ENCODE measurements at regions of chr4 and their contacts with region 1.

Region 1: DNA sequence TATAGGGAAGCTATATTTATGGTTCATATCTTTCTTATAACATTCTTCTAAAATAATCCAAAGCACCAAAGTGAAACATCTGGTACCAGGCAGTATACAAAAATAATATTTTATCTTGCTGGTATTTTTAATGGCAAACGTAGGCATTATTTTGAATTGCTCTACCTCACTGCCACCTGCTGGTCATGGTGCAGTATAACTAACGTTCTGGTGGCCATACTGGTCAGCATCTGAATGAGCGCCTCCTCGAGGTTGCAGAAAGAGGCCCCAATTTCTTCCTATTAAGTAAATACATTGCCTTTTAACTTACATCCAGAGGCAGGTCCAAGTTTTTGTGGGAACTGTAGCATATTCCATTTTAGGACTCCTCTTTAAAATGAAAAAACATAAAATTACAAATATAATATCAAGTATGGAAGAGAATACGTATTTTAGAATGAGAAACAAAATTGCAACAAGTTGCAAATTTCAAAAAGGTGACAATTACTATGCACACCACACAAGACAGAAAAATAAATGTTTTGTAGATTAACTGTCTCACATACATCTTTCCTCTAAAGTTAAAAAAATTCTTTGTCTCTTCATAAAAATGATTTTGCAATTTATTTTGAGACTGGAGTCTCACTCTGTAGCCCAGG is 22.9 kb upstream of the CWH43 start:
- DNase-seq: peak; percentile 44 to 87 (median 68)
- ATAC-seq: peak; percentile 89 to 97 (median 94)
- H3K4me3 ChIP-seq: no peak overlapping the region
- H3K4me3 Mint-ChIP-seq: no peak overlapping the region
- H3K27ac ChIP-seq: no peak overlapping the region
- H3K27ac Mint-ChIP-seq: no peak overlapping the region
- H3K4me1 ChIP-seq: no peaks in the 10 kb centered on the region
- H3K4me1 Mint-ChIP-seq: peaks cover 3 to 9% (median 3%) of the 10 kb centered on the region in 3 donors
- H3K27me3 ChIP-seq: no peaks in the 10 kb centered on the region
- H3K27me3 Mint-ChIP-seq: peaks cover 0 to 2% of the 10 kb centered on the region in 2 donors

Region 2: GRCh38 chr4:47954245-47954644 is 1008.9 kb before region 1 on chr4:
- CTCF ChIA-PET with region 1: no interaction called
- POLR2A ChIA-PET with region 1: no interaction called
- DNase-seq: no peak
- ATAC-seq: no peak
- H3K4me3 ChIP-seq: no peak overlapping the region
- H3K4me3 Mint-ChIP-seq: no peak overlapping the region
- H3K27ac ChIP-seq: no peak overlapping the region
- H3K27ac Mint-ChIP-seq: no peak overlapping the region
- H3K4me1 ChIP-seq: no peaks in the 10 kb centered on the region
- H3K4me1 Mint-ChIP-seq: no peaks in the 10 kb centered on the region
- H3K27me3 ChIP-seq: no peaks in the 10 kb centered on the region
- H3K27me3 Mint-ChIP-seq: peaks cover 3 to 5% of the 10 kb centered on the region in 2 donors

Region 3: DNA sequence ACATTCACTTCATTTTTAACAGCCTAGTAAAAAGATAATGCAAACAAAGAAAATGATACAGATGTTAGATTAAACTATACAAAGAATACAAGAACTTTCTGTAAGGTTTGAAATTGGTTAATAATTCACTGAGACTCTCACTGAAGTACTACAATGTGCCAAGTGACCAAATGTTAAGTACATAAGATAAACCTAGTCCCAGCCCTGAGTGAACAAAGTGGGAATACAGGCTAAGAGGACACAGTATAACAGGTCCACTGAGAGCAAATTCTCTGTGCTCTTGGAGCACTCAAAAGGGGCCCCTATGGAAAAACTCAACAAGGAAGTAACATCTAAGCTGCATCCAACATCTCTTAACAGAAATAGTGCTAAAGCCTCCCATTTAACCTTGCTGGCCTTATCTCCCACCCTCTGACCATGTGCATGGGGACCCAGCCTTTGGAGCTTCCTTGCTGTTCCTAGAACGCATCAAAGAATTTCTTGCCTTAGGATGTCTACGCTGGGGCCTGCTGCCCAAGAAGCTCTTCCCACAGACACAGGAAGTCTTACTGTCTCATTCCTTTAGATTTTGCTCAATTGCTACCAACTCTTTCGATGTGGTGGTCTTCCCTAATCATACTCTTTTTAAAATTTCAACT is 359.7 kb before region 1 on chr4:
- CTCF ChIA-PET with region 1: no interaction called
- POLR2A ChIA-PET with region 1: no interaction called
- DNase-seq: no peak
- ATAC-seq: no peak
- H3K4me3 ChIP-seq: no peak overlapping the region
- H3K4me3 Mint-ChIP-seq: no peak overlapping the region
- H3K27ac ChIP-seq: no peak overlapping the region
- H3K27ac Mint-ChIP-seq: peak overlapping the region; percentile 31 to 46
- H3K4me1 ChIP-seq: no peaks in the 10 kb centered on the region
- H3K4me1 Mint-ChIP-seq: peaks cover 0 to 3% (median 1%) of the 10 kb centered on the region in 3 donors
- H3K27me3 ChIP-seq: no peaks in the 10 kb centered on the region
- H3K27me3 Mint-ChIP-seq: no peaks in the 10 kb centered on the region

Region 4: DNA sequence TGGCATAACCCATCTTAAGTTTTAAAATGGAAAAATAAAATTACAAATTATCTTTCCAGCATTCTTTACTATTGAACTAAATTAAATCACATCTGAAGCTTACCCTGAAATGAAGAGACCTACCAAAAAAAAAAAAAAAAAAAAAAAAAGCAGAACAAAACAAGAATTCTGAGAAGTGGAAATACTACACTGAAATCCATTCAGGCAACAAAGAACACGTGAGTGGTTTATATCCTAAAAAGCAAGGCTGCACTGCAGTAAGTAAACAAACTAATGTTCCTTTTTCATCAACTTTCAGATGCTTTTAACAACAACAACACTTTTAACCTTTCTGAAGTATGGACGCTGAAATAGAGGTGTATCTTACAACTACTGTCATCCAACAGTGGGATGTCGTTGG is 190.6 kb before region 1 on chr4:
- CTCF ChIA-PET with region 1: no interaction called
- POLR2A ChIA-PET with region 1: interaction called in 1 of 2 experiments, 10 read pairs
- DNase-seq: no peak
- ATAC-seq: no peak
- H3K4me3 ChIP-seq: no peak overlapping the region
- H3K4me3 Mint-ChIP-seq: peak overlapping the region in 1 of 3 donors; percentile 17
- H3K27ac ChIP-seq: no peak overlapping the region
- H3K27ac Mint-ChIP-seq: no peak overlapping the region
- H3K4me1 ChIP-seq: peaks cover 19 to 29% of the 10 kb centered on the region in 2 experiments
- H3K4me1 Mint-ChIP-seq: peaks cover 83 to 91% (median 84%) of the 10 kb centered on the region in 3 donors
- H3K27me3 ChIP-seq: no peaks in the 10 kb centered on the region
- H3K27me3 Mint-ChIP-seq: no peaks in the 10 kb centered on the region

Region 5: DNA sequence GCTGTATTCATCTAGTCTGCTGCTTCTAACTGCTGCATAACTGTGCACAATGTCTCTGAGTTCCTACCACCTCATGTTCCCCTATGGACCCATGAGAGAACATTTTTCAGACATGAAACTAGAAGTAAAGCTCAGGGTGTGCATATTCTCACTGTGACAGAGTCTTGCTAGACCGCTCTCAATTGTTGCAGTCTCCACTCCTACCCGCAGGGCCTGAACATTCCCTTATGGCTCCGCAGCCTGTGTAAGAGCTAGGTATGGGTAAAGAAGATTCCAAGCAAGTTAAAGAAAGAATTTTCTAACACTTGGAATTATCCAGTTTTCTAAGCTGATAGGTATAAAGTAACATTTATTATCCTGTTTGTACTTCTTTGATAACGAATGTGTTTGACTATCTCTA is 62.0 kb before region 1 on chr4:
- CTCF ChIA-PET with region 1: interaction called, 7 to 11 read pairs
- POLR2A ChIA-PET with region 1: interaction called in 1 of 2 experiments, 4 read pairs
- DNase-seq: no peak
- ATAC-seq: no peak
- H3K4me3 ChIP-seq: no peak overlapping the region
- H3K4me3 Mint-ChIP-seq: no peak overlapping the region
- H3K27ac ChIP-seq: no peak overlapping the region
- H3K27ac Mint-ChIP-seq: peak overlapping the region in 1 of 2 donors; percentile 18
- H3K4me1 ChIP-seq: peaks cover 28 to 38% of the 10 kb centered on the region in 2 experiments
- H3K4me1 Mint-ChIP-seq: peaks cover 58 to 78% (median 60%) of the 10 kb centered on the region in 3 donors
- H3K27me3 ChIP-seq: no peaks in the 10 kb centered on the region
- H3K27me3 Mint-ChIP-seq: no peaks in the 10 kb centered on the region

Region 6: GRCh38 chr4:48944756-48945241 is 18.4 kb before region 1 on chr4:
- CTCF ChIA-PET with region 1: interaction called, 5 to 12 read pairs
- POLR2A ChIA-PET with region 1: no interaction called
- DNase-seq: peak in 32 of 35 experiments; percentile 3 to 71 (median 36)
- ATAC-seq: peak; percentile 66 to 99 (median 87)
- H3K4me3 ChIP-seq: peak overlapping the region in 1 of 2 donors; percentile 23
- H3K4me3 Mint-ChIP-seq: peak overlapping the region in 2 of 3 donors; percentile 25 to 62
- H3K27ac ChIP-seq: no peak overlapping the region
- H3K27ac Mint-ChIP-seq: peak overlapping the region; percentile 19 to 62
- H3K4me1 ChIP-seq: peaks cover 12 to 17% of the 10 kb centered on the region in 2 experiments
- H3K4me1 Mint-ChIP-seq: peaks cover 23 to 31% (median 28%) of the 10 kb centered on the region in 3 donors
- H3K27me3 ChIP-seq: peaks cover 0 to 4% of the 10 kb centered on the region in 2 experiments
- H3K27me3 Mint-ChIP-seq: peaks cover 0 to 3% of the 10 kb centered on the region in 2 donors